ENCODE measurements at regions of chr6 and their contacts with region 1.

Region 1: GRCh38 chr6:50390416-50390815 is 322.9 kb upstream of the TFAP2D start:
- DNase-seq: no peak
- H3K4me3 ChIP-seq: no peak overlapping the region
- H3K27ac ChIP-seq: no peak overlapping the region
- H3K4me1 ChIP-seq: no peaks in the 10 kb centered on the region
- H3K27me3 ChIP-seq: no peaks in the 10 kb centered on the region
- CTCF ChIP-seq: no peak

Region 2: DNA sequence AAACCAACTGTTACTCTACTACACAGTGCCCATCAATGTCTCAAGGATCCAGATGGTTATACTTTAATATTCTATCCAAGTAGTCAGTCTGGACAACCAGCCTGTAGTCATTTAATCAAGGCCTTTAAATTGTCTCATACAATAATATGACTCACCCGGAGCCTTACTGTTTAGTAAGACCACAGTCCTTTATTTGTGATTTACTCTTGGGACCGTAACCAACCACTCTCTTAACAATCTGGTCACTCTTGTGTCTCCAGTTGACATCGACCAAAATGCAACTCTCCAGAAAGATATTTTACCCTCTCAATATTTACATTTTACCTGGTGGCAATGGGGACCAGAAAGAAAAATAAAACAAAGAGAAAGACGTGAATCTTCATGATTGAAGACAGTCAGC is 441.4 kb before region 1 on chr6:
- intact Hi-C with region 1: loop called (anchors 5 kb)
- DNase-seq: no peak
- H3K4me3 ChIP-seq: no peak overlapping the region
- H3K27ac ChIP-seq: no peak overlapping the region
- H3K4me1 ChIP-seq: no peaks in the 10 kb centered on the region
- H3K27me3 ChIP-seq: no peaks in the 10 kb centered on the region
- CTCF ChIP-seq: no peak

Region 3: GRCh38 chr6:50337532-50338122 is 52.8 kb before region 1 on chr6:
- intact Hi-C with region 1: no loop called
- DNase-seq: no peak
- H3K4me3 ChIP-seq: no peak overlapping the region
- H3K27ac ChIP-seq: no peak overlapping the region
- H3K4me1 ChIP-seq: no peaks in the 10 kb centered on the region
- H3K27me3 ChIP-seq: no peaks in the 10 kb centered on the region
- CTCF ChIP-seq: no peak

Region 4: GRCh38 chr6:51322505-51322904 is 932.1 kb after region 1 on chr6:
- intact Hi-C with region 1: no loop called
- DNase-seq: no peak
- H3K4me3 ChIP-seq: no peak overlapping the region
- H3K27ac ChIP-seq: no peak overlapping the region
- H3K4me1 ChIP-seq: no peaks in the 10 kb centered on the region
- H3K27me3 ChIP-seq: no peaks in the 10 kb centered on the region
- CTCF ChIP-seq: no peak

Measured in tibial artery (tissue), 4 donors.